ENCODE measurements at regions of chr7 and their contacts with region 1.

Region 1: DNA sequence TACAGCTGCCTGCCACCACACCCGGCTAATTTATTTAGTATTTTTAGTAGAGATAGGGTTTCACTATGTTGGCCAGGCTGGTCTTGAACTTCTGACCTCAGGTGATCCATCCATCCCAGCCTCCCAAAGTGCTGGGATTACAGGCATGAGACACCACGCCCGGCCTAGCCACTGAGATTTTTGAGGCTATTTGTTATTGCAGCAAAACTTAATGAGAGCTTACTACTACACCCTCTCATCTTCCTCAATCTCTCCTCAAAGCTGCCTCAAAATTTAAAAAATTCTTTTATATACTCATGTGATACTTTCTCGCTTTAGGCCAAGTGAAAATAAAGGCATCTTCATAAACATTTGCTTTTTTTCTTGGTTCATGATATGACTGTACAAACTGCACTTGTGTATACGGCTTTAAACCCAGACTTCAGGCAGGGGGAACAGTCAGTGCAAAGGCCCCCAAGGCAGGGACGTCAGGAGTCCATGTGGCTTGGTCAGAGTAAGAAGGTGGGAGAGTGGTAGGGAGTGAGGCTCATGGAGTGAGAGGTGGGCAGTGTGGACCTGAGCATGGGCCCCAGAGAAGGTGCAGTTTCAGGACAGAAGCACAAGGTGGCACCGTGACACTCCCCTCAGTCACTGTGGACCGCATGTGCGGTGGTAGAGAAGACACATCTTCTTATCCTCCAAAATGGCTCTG is 55.5 kb downstream of the SYPL1 start:
- DNase-seq: peak; percentile 77
- CTCF ChIP-seq: peak; percentile 96

Region 2: GRCh38 chr7:106153891-106154449 is 97.3 kb after region 1 on chr7:
- in situ Hi-C with region 1: loop called (anchors 5 kb)
- DNase-seq: peak; percentile 74
- CTCF ChIP-seq: peak; percentile 91